Activated B cell treated with CpG ODN at 0.5 μM for 24 hours (primary cell): ENCODE measurements at regions of chrX and their contacts with region 1.

Region 1: DNA sequence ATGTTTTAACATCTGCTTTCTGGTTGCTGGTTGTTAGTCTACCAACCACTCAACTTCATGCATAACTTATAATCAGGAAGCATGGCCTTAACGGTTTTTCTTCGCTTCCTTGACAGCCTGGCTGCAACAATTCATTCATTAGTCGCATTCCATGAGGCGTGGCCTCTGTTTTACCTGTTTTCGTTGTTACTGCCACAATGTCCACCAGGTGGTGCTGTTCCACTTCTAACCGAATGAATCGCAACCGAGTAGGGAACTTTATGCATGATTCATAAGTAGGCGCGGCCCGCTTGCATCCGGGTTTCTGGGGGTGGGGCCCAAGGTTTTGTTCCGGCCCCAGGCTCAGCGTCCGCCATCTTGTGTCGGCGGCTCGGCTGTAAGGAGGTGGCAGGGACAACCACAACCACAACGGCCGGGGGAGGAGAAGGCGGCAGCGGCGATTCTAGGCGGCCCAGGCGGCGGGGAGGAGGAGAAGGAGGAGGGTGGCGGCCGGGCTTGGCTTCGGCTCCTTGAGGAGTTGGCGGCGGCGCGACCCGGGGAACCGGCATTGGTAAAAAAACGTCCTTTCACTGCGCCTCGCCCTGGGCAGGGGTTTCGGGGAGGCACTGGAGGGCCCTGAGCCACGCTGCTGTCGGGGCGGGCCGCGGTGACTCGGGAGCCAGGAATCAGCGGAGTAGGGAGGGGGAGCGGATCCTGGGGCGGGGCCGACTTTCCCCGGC is at the start of gene UBA1:
- DNase-seq: peak; percentile 72
- ATAC-seq: peak; percentile 71
- H3K4me3 Mint-ChIP-seq: peak within 1 kb of the TSS; percentile 95
- H3K27ac Mint-ChIP-seq: peak within 1 kb of the TSS; percentile 96
- H3K4me1 Mint-ChIP-seq: peaks cover 58% of the 10 kb centered on the region
- H3K27me3 Mint-ChIP-seq: no peaks in the 10 kb centered on the region
- CTCF ChIP-seq: no peak
- total RNA-seq, gene UBA1: 229 and 235 TPM in 2 replicates

Region 2: DNA sequence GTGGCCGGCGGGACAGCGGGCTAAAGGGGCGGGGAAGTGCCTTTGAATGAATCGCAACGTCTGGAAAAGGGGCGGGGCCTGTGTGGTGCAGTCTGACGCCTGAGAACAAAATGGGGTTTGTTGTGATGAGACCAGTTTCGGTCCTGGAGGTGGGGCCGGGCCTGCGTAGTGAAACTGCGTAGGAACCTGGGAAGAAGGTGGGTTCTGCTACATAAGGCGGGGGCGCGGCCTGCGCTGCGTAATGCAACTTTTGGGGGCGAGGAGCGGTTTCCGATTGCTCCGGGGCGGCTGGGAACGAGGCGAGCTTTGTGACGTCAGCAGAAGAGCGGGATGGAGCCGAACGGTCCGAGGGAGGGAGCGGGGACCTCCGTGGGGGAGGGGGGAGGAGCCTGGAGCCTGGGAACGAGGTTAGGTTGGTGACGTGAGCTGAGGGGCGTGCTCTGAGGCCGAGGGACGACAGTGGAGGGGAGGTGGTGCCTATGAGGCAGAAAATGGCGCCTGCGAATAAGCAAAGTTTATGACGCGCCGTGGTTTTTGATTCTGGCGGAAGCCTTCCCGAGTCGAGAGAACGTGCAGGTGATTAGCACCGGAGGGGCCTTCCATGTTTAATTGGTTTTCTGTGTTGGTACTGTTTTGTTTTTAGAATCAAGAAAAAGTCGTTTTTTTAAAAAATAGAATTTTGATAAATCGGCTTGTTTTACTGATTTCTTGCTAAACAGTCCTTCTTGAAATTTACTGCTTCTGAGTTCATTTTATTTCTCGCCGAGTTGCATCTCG is 39.9 kb after region 1 on chrX:
- CTCF ChIA-PET with region 1: no interaction called
- POLR2A ChIA-PET with region 1: interaction called, 16 read pairs
- intact Hi-C with region 1: loop called (anchors 1 kb)
- DNase-seq: peak; percentile 74
- ATAC-seq: peak; percentile 90
- H3K4me3 Mint-ChIP-seq: peak overlapping the region; percentile 92
- H3K27ac Mint-ChIP-seq: peak overlapping the region; percentile 98
- H3K4me1 Mint-ChIP-seq: peaks cover 15% of the 10 kb centered on the region
- H3K27me3 Mint-ChIP-seq: no peaks in the 10 kb centered on the region
- CTCF ChIP-seq: no peak

Region 3: DNA sequence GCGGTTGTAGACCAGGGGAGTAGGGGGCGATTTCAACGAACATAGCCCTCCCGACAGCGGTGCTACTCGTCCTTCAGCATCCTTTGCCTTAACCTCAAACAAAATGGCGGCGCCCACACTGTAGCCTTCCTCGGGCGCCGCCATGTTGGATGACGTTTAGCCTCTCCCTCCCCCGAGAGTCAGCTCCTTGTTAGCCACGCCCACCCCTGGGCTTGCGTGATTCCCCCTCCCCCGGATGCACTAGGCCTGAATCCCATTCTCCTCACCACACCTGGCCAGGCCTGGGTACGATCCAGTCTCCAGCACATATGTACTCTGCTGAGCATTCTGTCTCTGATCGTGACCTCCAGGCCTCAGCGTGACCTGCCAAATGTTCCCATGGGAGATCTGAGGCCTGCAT is 127.8 kb after region 1 on chrX:
- CTCF ChIA-PET with region 1: no interaction called
- POLR2A ChIA-PET with region 1: no interaction called
- intact Hi-C with region 1: no loop called
- DNase-seq: no peak
- ATAC-seq: no peak
- H3K4me3 Mint-ChIP-seq: no peak overlapping the region
- H3K27ac Mint-ChIP-seq: no peak overlapping the region
- H3K4me1 Mint-ChIP-seq: no peaks in the 10 kb centered on the region
- H3K27me3 Mint-ChIP-seq: no peaks in the 10 kb centered on the region
- CTCF ChIP-seq: no peak

Region 4: GRCh38 chrX:47384502-47384901 is 190.9 kb after region 1 on chrX:
- CTCF ChIA-PET with region 1: interaction called, 12 read pairs
- POLR2A ChIA-PET with region 1: interaction called, 5 read pairs
- intact Hi-C with region 1: loop called (anchors 1 kb)
- DNase-seq: no peak
- ATAC-seq: peak; percentile 72
- H3K4me3 Mint-ChIP-seq: no peak overlapping the region
- H3K27ac Mint-ChIP-seq: no peak overlapping the region
- H3K4me1 Mint-ChIP-seq: peaks cover 7% of the 10 kb centered on the region
- H3K27me3 Mint-ChIP-seq: no peaks in the 10 kb centered on the region
- CTCF ChIP-seq: peak; percentile 33

Region 5: GRCh38 chrX:47560831-47561652 is 367.4 kb after region 1 on chrX and contains the start of gene ARAF:
- CTCF ChIA-PET with region 1: no interaction called
- POLR2A ChIA-PET with region 1: interaction called, 5 read pairs
- intact Hi-C with region 1: loop called (anchors 1 kb)
- DNase-seq: peak; percentile 77
- ATAC-seq: peak; percentile 88
- H3K4me3 Mint-ChIP-seq: peak within 1 kb of the TSS; percentile 89
- H3K27ac Mint-ChIP-seq: peak within 1 kb of the TSS; percentile 96
- H3K4me1 Mint-ChIP-seq: peaks cover 44% of the 10 kb centered on the region
- H3K27me3 Mint-ChIP-seq: no peaks in the 10 kb centered on the region
- CTCF ChIP-seq: no peak
- total RNA-seq, gene ARAF: 97.2 and 108 TPM in 2 replicates

Region 6: DNA sequence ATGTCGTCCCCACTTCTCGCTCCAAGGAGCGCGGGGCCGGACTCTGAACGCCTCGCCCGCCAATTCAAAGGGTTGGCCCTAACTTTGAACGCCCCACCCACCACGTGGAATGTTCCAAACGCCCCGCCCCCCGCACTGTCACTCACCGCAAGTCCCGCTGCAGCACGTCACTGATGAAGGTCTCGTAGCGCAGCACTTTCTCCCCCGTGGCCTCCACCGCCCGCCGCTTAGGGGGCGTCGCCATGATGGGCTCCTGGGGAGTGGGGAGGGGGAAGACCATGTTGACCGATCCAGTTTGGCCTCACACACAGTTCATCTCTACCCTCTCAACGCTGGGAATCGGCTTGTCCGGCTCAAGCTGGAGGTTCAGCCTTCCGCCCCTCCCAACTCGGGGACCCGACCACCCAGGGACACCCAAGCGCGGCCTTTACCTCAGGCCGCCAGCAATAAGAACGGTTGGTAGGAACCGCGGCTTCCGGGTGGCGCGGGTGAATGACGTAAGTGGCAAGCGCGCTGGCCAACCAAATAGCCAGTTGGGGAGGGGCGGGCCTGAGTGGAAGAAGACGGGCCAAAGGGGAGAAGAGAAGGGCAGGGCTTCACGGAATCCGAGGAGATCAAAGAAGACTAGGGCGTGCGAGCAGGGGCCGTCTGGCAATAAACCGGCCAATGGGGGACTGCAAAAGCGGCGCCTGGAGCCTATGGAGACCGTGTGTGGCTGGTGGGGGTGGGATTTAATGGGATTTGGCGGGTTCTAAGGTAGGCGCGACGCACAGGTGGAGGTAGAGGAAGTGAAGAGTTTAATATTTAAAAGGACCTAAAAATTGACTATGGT is 465.3 kb after region 1 on chrX and contains the start of gene UXT:
- CTCF ChIA-PET with region 1: no interaction called
- POLR2A ChIA-PET with region 1: no interaction called
- intact Hi-C with region 1: loop called (anchors 2 kb)
- DNase-seq: peak; percentile 82
- ATAC-seq: peak; percentile 85
- H3K4me3 Mint-ChIP-seq: peak within 1 kb of the TSS; percentile 91
- H3K27ac Mint-ChIP-seq: peak within 1 kb of the TSS; percentile 99
- H3K4me1 Mint-ChIP-seq: peaks cover 18% of the 10 kb centered on the region
- H3K27me3 Mint-ChIP-seq: no peaks in the 10 kb centered on the region
- CTCF ChIP-seq: no peak
- total RNA-seq, gene UXT: 184 and 201 TPM in 2 replicates